Activated CD4-positive, alpha-beta T cell treated with anti-CD3 and anti-CD28 coated beads for 36 hours (primary cell): ENCODE measurements at regions of chr22 and their contacts with region 1.

Region 1: GRCh38 chr22:23970816-23971486 is 3.3 kb downstream of the DDT start:
- DNase-seq: no peak
- ATAC-seq: no peak
- H3K4me3 Mint-ChIP-seq: no peak overlapping the region
- H3K27ac Mint-ChIP-seq: peak overlapping the region; percentile 51
- H3K4me1 Mint-ChIP-seq: peaks cover 19% of the 10 kb centered on the region
- H3K27me3 Mint-ChIP-seq: no peaks in the 10 kb centered on the region

Region 2: GRCh38 chr22:23938328-23939016 is 32.5 kb before region 1 on chr22:
- CTCF ChIA-PET with region 1: no interaction called
- POLR2A ChIA-PET with region 1: no interaction called
- intact Hi-C with region 1: loop called (anchors 5 kb)
- DNase-seq: no peak
- ATAC-seq: no peak
- H3K4me3 Mint-ChIP-seq: no peak overlapping the region
- H3K27ac Mint-ChIP-seq: no peak overlapping the region
- H3K4me1 Mint-ChIP-seq: no peaks in the 10 kb centered on the region
- H3K27me3 Mint-ChIP-seq: no peaks in the 10 kb centered on the region

Region 3: GRCh38 chr22:24005201-24005600 is 34.2 kb after region 1 on chr22 and contains the start of gene GSTT4:
- CTCF ChIA-PET with region 1: no interaction called
- POLR2A ChIA-PET with region 1: no interaction called
- intact Hi-C with region 1: loop called in 1 of 2 experiments (anchors 5 kb)
- DNase-seq: no peak
- ATAC-seq: no peak
- H3K4me3 Mint-ChIP-seq: no peak within 1 kb of the TSS
- H3K27ac Mint-ChIP-seq: no peak within 1 kb of the TSS
- H3K4me1 Mint-ChIP-seq: peaks cover 1% of the 10 kb centered on the region
- H3K27me3 Mint-ChIP-seq: peaks cover 2% of the 10 kb centered on the region
- total RNA-seq, gene GSTT4: not detected